ENCODE measurements at regions of chr2 and their contacts with region 1.

Region 1: DNA sequence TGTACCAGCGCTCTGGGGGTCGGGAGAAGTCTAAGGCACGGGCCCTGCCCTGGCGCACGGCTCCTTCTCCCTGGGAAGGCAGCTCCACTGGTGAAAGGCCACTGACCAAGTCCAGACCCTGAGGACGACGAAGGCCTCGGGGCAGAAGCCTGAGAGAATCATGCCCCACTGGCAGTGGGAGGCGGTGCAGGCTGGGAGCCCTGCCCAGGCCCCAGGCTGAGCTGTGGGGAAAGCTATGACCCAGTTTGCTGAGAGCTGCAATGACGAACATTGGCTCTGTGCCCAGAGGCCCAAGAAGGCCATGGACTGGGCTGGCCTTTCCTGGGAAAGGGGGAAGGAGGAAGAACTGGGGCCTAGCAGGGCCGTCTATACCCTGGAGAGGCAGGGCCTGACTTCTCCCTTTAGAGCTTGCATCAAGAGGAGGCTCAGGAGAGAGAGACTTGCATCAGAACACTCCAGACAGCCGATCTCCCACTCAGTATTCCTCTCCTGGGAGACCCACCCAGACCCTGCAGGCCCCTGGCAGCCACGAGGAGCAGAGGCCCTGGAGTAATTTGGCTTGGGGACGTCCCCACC is 32.9 kb downstream of the HS1BP3 start:
- DNase-seq: peak; percentile 96 to 98
- ATAC-seq: peak; percentile 77 to 90 (median 84)
- H3K4me3 ChIP-seq: peak overlapping the region in 1 of 10 donors; percentile 1
- H3K27ac ChIP-seq: peak overlapping the region; percentile 87 to 99 (median 96)
- H3K4me1 ChIP-seq: peaks cover 63 to 100% (median 92%) of the 10 kb centered on the region in 9 donors
- H3K27me3 ChIP-seq: no peaks in the 10 kb centered on the region
- CTCF ChIP-seq: peak; percentile 35 to 73 (median 60)

Region 2: GRCh38 chr2:19801367-19802080 is 816.5 kb before region 1 on chr2:
- intact Hi-C with region 1: no loop called
- DNase-seq: peak; percentile 81 to 83
- ATAC-seq: peak; percentile 89 to 98 (median 96)
- H3K4me3 ChIP-seq: no peak overlapping the region
- H3K27ac ChIP-seq: peak overlapping the region in 6 of 10 donors; percentile 10 to 61 (median 38)
- H3K4me1 ChIP-seq: peaks cover 12 to 32% (median 18%) of the 10 kb centered on the region in 9 donors
- H3K27me3 ChIP-seq: no peaks in the 10 kb centered on the region
- CTCF ChIP-seq: no peak

Region 3: GRCh38 chr2:20578895-20579825 is 38.8 kb before region 1 on chr2:
- intact Hi-C with region 1: loop called in 3 of 10 experiments (anchors 5 kb)
- DNase-seq: peak; percentile 73 to 92
- ATAC-seq: peak; percentile 85 to 94 (median 91)
- H3K4me3 ChIP-seq: no peak overlapping the region
- H3K27ac ChIP-seq: peak overlapping the region; percentile 57 to 95 (median 82)
- H3K4me1 ChIP-seq: peaks cover 28 to 83% (median 70%) of the 10 kb centered on the region in 9 donors
- H3K27me3 ChIP-seq: no peaks in the 10 kb centered on the region
- CTCF ChIP-seq: no peak

Region 4: DNA sequence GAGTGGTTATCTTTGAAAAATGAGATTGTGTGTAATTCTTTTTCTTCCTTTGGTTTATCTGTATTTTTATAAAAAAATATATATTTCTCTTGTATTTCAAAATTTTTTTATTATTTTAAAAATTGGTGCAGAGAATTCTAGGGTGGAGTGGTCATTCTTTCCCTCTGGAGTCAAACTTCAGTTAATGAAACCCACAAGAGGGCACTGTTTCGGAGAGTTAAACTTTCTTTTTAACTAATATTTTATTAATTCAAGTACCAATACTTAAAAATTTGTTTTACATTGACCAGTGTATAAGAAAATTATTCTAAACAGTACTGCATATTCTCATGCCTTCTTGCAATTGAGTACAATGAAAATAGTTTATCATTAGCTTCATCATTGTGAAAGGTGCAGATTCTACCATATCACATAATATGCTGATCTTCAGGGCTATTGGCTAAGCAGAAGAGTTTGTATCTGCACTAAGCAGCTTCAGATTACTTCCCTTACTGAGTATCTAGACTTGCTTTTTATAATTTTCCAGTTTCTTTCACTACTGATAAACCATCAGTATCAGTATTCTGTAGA is 17.1 kb before region 1 on chr2:
- intact Hi-C with region 1: loop called in 2 of 10 experiments (anchors 1 to 2 kb)
- DNase-seq: no peak
- ATAC-seq: no peak
- H3K4me3 ChIP-seq: no peak overlapping the region
- H3K27ac ChIP-seq: peak overlapping the region in 8 of 10 donors; percentile 65 to 88 (median 85)
- H3K4me1 ChIP-seq: peaks cover 29 to 83% (median 72%) of the 10 kb centered on the region in 9 donors
- H3K27me3 ChIP-seq: no peaks in the 10 kb centered on the region
- CTCF ChIP-seq: peak in 8 of 9 donors; percentile 9 to 73 (median 52)

Region 5: GRCh38 chr2:20844246-20844645 is 226.3 kb after region 1 on chr2:
- intact Hi-C with region 1: no loop called
- DNase-seq: no peak
- ATAC-seq: no peak
- H3K4me3 ChIP-seq: no peak overlapping the region
- H3K27ac ChIP-seq: no peak overlapping the region
- H3K4me1 ChIP-seq: no peaks in the 10 kb centered on the region
- H3K27me3 ChIP-seq: peaks cover 0 to 26% (median 10%) of the 10 kb centered on the region in 7 donors
- CTCF ChIP-seq: no peak

Measured in heart right ventricle (tissue), 16 donors.